ENCODE measurements at regions of chr1 and their contacts with region 1.

Region 1: GRCh38 chr1:156625436-156626078 is 6.3 kb downstream of the HAPLN2 start:
- DNase-seq: peak; percentile 79
- H3K4me3 ChIP-seq: peak overlapping the region; percentile 10 to 31; a peak in 2 of 4 replicates
- H3K27ac ChIP-seq: no peak overlapping the region
- H3K4me1 ChIP-seq: peaks cover 0 to 13% of the 10 kb centered on the region in 2 experiments; a peak in 1 of 4 replicates
- H3K27me3 ChIP-seq: peaks cover 29% of the 10 kb centered on the region
- CTCF ChIP-seq: peak; percentile 96
- EP300 ChIP-seq: no peak
- RAD21 ChIP-seq: peak; percentile 76

Region 2: GRCh38 chr1:156414461-156415064 is 211.0 kb before region 1 on chr1:
- CTCF ChIA-PET with region 1: no interaction called
- POLR2A ChIA-PET with region 1: no interaction called
- DNase-seq: no peak
- H3K4me3 ChIP-seq: no peak overlapping the region
- H3K27ac ChIP-seq: no peak overlapping the region
- H3K4me1 ChIP-seq: peaks cover 0 to 4% of the 10 kb centered on the region in 2 experiments; a peak in 2 of 4 replicates
- H3K27me3 ChIP-seq: peaks cover 2% of the 10 kb centered on the region; the same call in 1 of the 2 replicates
- CTCF ChIP-seq: no peak
- EP300 ChIP-seq: no peak
- RAD21 ChIP-seq: no peak

Region 3: GRCh38 chr1:156608036-156608674 is 17.4 kb before region 1 on chr1:
- CTCF ChIA-PET with region 1: interaction called, 109 read pairs
- POLR2A ChIA-PET with region 1: no interaction called
- DNase-seq: peak; percentile 65
- H3K4me3 ChIP-seq: peak overlapping the region in 1 of 2 experiments; percentile 18; a peak in 1 of 4 replicates
- H3K27ac ChIP-seq: no peak overlapping the region
- H3K4me1 ChIP-seq: peaks cover 0 to 2% of the 10 kb centered on the region in 2 experiments; a peak in 1 of 4 replicates
- H3K27me3 ChIP-seq: no peaks in the 10 kb centered on the region
- CTCF ChIP-seq: peak; percentile 81
- EP300 ChIP-seq: no peak
- RAD21 ChIP-seq: peak; percentile 81

Region 4: GRCh38 chr1:156652131-156652991 is 26.8 kb after region 1 on chr1:
- CTCF ChIA-PET with region 1: interaction called, 643 read pairs
- POLR2A ChIA-PET with region 1: interaction called, 7 read pairs
- DNase-seq: no peak
- H3K4me3 ChIP-seq: no peak overlapping the region
- H3K27ac ChIP-seq: no peak overlapping the region
- H3K4me1 ChIP-seq: peaks cover 0 to 16% of the 10 kb centered on the region in 2 experiments; a peak in 1 of 4 replicates
- H3K27me3 ChIP-seq: no peaks in the 10 kb centered on the region
- CTCF ChIP-seq: no peak
- EP300 ChIP-seq: no peak
- RAD21 ChIP-seq: no peak

Region 5: GRCh38 chr1:156667610-156667967 is 42.0 kb after region 1 on chr1:
- CTCF ChIA-PET with region 1: interaction called, 643 read pairs
- POLR2A ChIA-PET with region 1: no interaction called
- DNase-seq: no peak
- H3K4me3 ChIP-seq: no peak overlapping the region
- H3K27ac ChIP-seq: peak overlapping the region; percentile 11 to 75; a peak in 2 of 4 replicates
- H3K4me1 ChIP-seq: peaks cover 19 to 44% of the 10 kb centered on the region in 2 experiments; a peak in 3 of 4 replicates
- H3K27me3 ChIP-seq: no peaks in the 10 kb centered on the region
- CTCF ChIP-seq: no peak
- EP300 ChIP-seq: no peak
- RAD21 ChIP-seq: no peak

Region 6: DNA sequence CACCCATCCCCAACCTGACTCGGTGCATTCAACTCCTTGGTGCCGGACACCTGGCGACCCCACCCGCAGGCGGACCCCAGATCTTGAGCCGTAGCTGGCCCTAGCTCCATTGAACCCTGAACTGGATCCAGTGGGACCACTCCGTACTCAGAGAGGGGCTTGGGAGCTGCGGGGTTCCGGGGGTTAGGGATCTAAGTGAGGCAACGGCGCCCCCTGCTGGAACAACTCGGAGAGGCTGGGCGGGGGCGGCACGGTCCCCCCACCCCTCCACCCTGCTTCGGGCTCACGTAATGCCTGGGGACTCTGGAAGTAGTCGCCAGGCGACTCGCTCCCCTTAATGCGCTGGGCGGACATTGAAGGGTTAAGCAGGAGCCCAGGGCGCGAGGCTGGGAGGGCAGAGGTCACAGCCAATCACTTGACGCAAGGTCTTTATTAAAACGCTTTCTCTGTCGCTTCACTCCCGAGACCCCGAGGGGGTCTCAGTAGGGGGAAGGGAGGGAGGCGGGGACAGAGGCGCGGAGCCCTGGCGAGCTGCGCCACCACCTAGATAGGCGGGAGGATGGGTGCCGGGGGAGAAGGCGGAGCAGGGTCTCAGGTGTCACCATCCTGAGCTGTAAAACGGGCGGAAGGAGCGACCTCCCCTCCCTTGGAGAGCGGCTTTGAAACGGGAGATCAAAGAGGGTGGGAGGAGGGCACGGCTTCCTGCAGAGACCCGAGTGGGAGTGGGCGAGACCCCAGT is 80.5 kb after region 1 on chr1:
- CTCF ChIA-PET with region 1: interaction called, 30 read pairs
- POLR2A ChIA-PET with region 1: interaction called, 3 read pairs
- DNase-seq: peak; percentile 90
- H3K4me3 ChIP-seq: peak overlapping the region; percentile 54 to 58
- H3K27ac ChIP-seq: peak overlapping the region in 1 of 2 experiments; percentile 98; a peak in 2 of 4 replicates
- H3K4me1 ChIP-seq: peaks cover 70 to 90% of the 10 kb centered on the region in 2 experiments
- H3K27me3 ChIP-seq: no peaks in the 10 kb centered on the region
- CTCF ChIP-seq: peak; percentile 96
- EP300 ChIP-seq: no peak
- RAD21 ChIP-seq: peak; percentile 66

Measured in SK-N-SH (cell line).